CD4-positive, alpha-beta T cell (primary cell): ENCODE measurements at regions of chr6 and their contacts with region 1.

Region 1: GRCh38 chr6:5143634-5144311 is 58.6 kb downstream of the PPP1R3G start:
- DNase-seq: peak; percentile 77 to 91 (median 82)
- ATAC-seq: peak; percentile 77
- H3K4me3 ChIP-seq: no peak overlapping the region
- H3K4me3 Mint-ChIP-seq: no peak overlapping the region
- H3K27ac ChIP-seq: no peak overlapping the region
- H3K27ac Mint-ChIP-seq: no peak overlapping the region
- H3K4me1 ChIP-seq: no peaks in the 10 kb centered on the region
- H3K4me1 Mint-ChIP-seq: peaks cover 4% of the 10 kb centered on the region
- H3K27me3 ChIP-seq: no peaks in the 10 kb centered on the region
- H3K27me3 Mint-ChIP-seq: no peaks in the 10 kb centered on the region
- CTCF ChIP-seq: peak; percentile 96

Region 2: GRCh38 chr6:4879724-4880371 is 263.9 kb before region 1 on chr6:
- CTCF ChIA-PET with region 1: no interaction called
- POLR2A ChIA-PET with region 1: no interaction called
- intact Hi-C with region 1: no loop called
- DNase-seq: no peak
- ATAC-seq: no peak
- H3K4me3 ChIP-seq: no peak overlapping the region
- H3K4me3 Mint-ChIP-seq: no peak overlapping the region
- H3K27ac ChIP-seq: no peak overlapping the region
- H3K27ac Mint-ChIP-seq: no peak overlapping the region
- H3K4me1 ChIP-seq: peaks cover 9% of the 10 kb centered on the region
- H3K4me1 Mint-ChIP-seq: peaks cover 71% of the 10 kb centered on the region
- H3K27me3 ChIP-seq: no peaks in the 10 kb centered on the region
- H3K27me3 Mint-ChIP-seq: no peaks in the 10 kb centered on the region
- CTCF ChIP-seq: no peak

Region 3: GRCh38 chr6:5174244-5174643 is 30.5 kb after region 1 on chr6:
- CTCF ChIA-PET with region 1: interaction called, 20 read pairs
- POLR2A ChIA-PET with region 1: interaction called, 16 read pairs
- intact Hi-C with region 1: loop called in 1 of 2 experiments (anchors 2 kb)
- DNase-seq: peak; percentile 14 to 90 (median 45)
- ATAC-seq: peak; percentile 89
- H3K4me3 ChIP-seq: peak overlapping the region; percentile 32
- H3K4me3 Mint-ChIP-seq: peak overlapping the region; percentile 66
- H3K27ac ChIP-seq: peak overlapping the region; percentile 53 to 89
- H3K27ac Mint-ChIP-seq: peak overlapping the region; percentile 83
- H3K4me1 ChIP-seq: peaks cover 26% of the 10 kb centered on the region
- H3K4me1 Mint-ChIP-seq: peaks cover 63% of the 10 kb centered on the region
- H3K27me3 ChIP-seq: no peaks in the 10 kb centered on the region
- H3K27me3 Mint-ChIP-seq: no peaks in the 10 kb centered on the region
- CTCF ChIP-seq: no peak

Region 4: GRCh38 chr6:5250911-5251310 is 107.1 kb after region 1 on chr6:
- CTCF ChIA-PET with region 1: no interaction called
- POLR2A ChIA-PET with region 1: no interaction called
- intact Hi-C with region 1: loop called in 1 of 2 experiments (anchors 5 kb)
- DNase-seq: no peak
- ATAC-seq: no peak
- H3K4me3 ChIP-seq: no peak overlapping the region
- H3K4me3 Mint-ChIP-seq: no peak overlapping the region
- H3K27ac ChIP-seq: no peak overlapping the region
- H3K27ac Mint-ChIP-seq: no peak overlapping the region
- H3K4me1 ChIP-seq: no peaks in the 10 kb centered on the region
- H3K4me1 Mint-ChIP-seq: no peaks in the 10 kb centered on the region
- H3K27me3 ChIP-seq: no peaks in the 10 kb centered on the region
- H3K27me3 Mint-ChIP-seq: no peaks in the 10 kb centered on the region
- CTCF ChIP-seq: no peak

Region 5: DNA sequence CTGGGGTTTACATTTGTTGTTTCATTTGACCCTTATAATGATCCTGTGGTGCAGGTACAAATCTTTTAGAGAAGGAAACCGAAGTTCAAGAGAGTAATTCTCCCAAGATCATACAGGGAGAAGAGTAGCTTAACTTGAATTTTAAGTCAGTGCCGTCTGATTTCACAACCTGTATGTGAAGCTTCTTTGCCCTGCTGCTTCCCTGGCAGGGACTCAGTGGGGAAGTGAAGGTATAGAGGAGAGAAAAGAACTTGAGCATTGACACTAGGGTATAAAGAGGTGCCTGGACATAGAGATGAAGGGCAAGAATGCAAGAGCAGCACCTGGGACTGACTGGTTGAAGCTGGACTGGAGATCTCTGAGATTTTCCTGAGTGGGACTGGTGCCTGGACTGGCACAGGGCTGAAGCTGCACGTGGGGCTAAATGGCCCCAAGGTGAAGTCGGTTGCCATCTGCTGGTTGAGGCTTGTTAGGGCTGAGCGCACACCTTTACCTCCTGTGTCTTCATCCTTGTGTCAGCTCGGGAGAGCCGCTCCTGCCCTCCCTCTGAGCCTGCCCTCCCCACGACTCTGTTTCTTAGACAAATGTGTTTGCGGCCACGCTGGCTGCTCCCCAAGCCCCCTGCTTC is 159.3 kb after region 1 on chr6:
- CTCF ChIA-PET with region 1: interaction called, 33 read pairs
- POLR2A ChIA-PET with region 1: interaction called, 3 read pairs
- intact Hi-C with region 1: loop called (anchors 1 kb)
- DNase-seq: peak; percentile 32 to 82 (median 46)
- ATAC-seq: peak; percentile 92
- H3K4me3 ChIP-seq: no peak overlapping the region
- H3K4me3 Mint-ChIP-seq: peak overlapping the region; percentile 58
- H3K27ac ChIP-seq: no peak overlapping the region
- H3K27ac Mint-ChIP-seq: no peak overlapping the region
- H3K4me1 ChIP-seq: peaks cover 19% of the 10 kb centered on the region
- H3K4me1 Mint-ChIP-seq: peaks cover 45% of the 10 kb centered on the region
- H3K27me3 ChIP-seq: no peaks in the 10 kb centered on the region
- H3K27me3 Mint-ChIP-seq: no peaks in the 10 kb centered on the region
- CTCF ChIP-seq: peak; percentile 63

Region 6: DNA sequence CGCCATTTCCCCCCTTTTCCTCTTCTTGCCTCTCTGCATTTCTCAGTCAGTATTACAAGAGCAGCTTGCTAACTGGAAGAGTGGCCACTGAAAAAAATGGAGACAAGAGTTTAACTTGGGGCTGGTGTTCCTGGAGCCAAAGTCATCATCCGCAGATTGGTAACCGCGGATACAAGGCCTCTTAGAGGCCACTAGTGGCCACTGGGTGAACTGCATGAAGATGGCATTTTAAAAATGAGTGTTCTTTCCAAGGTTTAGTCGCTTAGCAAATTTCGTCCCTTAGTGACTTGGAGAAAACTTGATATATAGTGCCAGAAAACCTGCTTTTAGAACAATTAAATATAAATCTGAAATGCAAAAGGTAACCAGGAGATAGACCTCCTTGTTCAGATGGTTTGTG is 1171.9 kb after region 1 on chr6:
- CTCF ChIA-PET with region 1: no interaction called
- POLR2A ChIA-PET with region 1: no interaction called
- intact Hi-C with region 1: loop called in 1 of 2 experiments (anchors 5 kb)
- DNase-seq: peak in 7 of 14 experiments; percentile 2 to 47 (median 20)
- ATAC-seq: no peak
- H3K4me3 ChIP-seq: no peak overlapping the region
- H3K4me3 Mint-ChIP-seq: no peak overlapping the region
- H3K27ac ChIP-seq: no peak overlapping the region
- H3K27ac Mint-ChIP-seq: no peak overlapping the region
- H3K4me1 ChIP-seq: no peaks in the 10 kb centered on the region
- H3K4me1 Mint-ChIP-seq: no peaks in the 10 kb centered on the region
- H3K27me3 ChIP-seq: peaks cover 18 to 34% of the 10 kb centered on the region in 2 experiments
- H3K27me3 Mint-ChIP-seq: peaks cover 62% of the 10 kb centered on the region
- CTCF ChIP-seq: peak; percentile 70